ENCODE measurements at regions of chr16 and their contacts with region 1.

Region 1: GRCh38 chr16:10266809-10267208 is 84.6 kb upstream of the GRIN2A start:
- DNase-seq: no peak
- ATAC-seq: no peak
- H3K4me3 ChIP-seq: no peak overlapping the region
- H3K27ac ChIP-seq: peak overlapping the region; percentile 88
- H3K4me1 ChIP-seq: peaks cover 78% of the 10 kb centered on the region
- H3K27me3 ChIP-seq: no peaks in the 10 kb centered on the region
- CTCF ChIP-seq: no peak
- EP300 ChIP-seq: no peak
- POLR2A ChIP-seq: no peak
- RAD21 ChIP-seq: no peak

Region 2: DNA sequence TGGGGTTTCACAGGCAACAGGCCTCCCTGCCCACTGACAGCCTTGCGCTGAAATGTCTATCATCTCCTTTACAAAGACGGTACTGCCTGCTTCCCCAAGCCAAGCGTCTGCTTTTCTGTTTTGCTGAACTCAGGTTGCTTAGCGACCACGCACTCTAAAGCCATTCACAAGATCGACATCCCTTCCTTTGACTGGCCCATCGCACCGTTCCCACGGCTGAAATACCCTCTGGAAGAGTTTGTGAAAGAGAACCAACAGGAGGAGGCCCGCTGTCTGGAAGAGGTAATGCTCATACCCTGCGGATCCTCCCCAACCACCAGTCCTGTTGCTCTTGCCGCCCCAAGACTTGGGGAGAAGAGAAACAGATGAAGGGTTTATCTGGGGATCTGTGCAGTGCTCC is 1498.1 kb before region 1 on chr16:
- CTCF ChIA-PET with region 1: no interaction called
- POLR2A ChIA-PET with region 1: no interaction called
- in situ Hi-C with region 1: no loop called
- intact Hi-C with region 1: loop called (anchors 5 kb)
- DNase-seq: no peak
- ATAC-seq: no peak
- H3K4me3 ChIP-seq: no peak overlapping the region
- H3K27ac ChIP-seq: no peak overlapping the region
- H3K4me1 ChIP-seq: no peaks in the 10 kb centered on the region
- H3K27me3 ChIP-seq: no peaks in the 10 kb centered on the region
- CTCF ChIP-seq: no peak
- EP300 ChIP-seq: no peak
- POLR2A ChIP-seq: no peak
- RAD21 ChIP-seq: no peak

Region 3: DNA sequence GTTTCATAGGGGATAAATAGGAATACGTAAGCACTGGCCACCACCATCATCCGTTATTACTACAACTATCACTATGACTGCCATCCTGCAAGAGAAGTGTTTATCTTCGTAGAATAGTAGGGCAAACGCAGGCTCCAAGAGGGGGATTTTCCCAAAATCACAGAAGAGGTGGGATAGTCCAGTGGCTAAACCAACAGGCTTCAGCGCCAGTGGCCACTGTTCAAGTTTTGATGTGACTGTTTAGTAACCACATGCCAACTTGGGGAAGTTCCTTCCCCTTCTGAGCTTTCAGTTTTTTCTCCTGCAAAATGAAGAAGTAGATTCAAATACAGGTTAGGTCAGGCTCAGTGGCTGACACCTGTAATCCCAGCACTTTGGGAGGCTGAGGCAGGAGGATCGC is 23.9 kb before region 1 on chr16:
- CTCF ChIA-PET with region 1: no interaction called
- POLR2A ChIA-PET with region 1: no interaction called
- in situ Hi-C with region 1: no loop called
- intact Hi-C with region 1: no loop called
- DNase-seq: no peak
- ATAC-seq: no peak
- H3K4me3 ChIP-seq: no peak overlapping the region
- H3K27ac ChIP-seq: no peak overlapping the region
- H3K4me1 ChIP-seq: no peaks in the 10 kb centered on the region
- H3K27me3 ChIP-seq: peaks cover 6 to 38% of the 10 kb centered on the region in 2 experiments; a peak in 3 of 5 replicates
- CTCF ChIP-seq: no peak
- EP300 ChIP-seq: no peak
- POLR2A ChIP-seq: no peak
- RAD21 ChIP-seq: no peak